Naive thymus-derived CD4-positive, alpha-beta T cell (primary cell): ENCODE measurements at regions of chr1 and their contacts with region 1.

Region 1: GRCh38 chr1:161531986-161532643 is 7.8 kb downstream of the HSPA6 start:
- DNase-seq: no peak
- ATAC-seq: no peak
- H3K4me3 ChIP-seq: no peak overlapping the region
- H3K4me3 Mint-ChIP-seq: peak overlapping the region in 9 of 10 donors; percentile 25 to 59 (median 50)
- H3K27ac ChIP-seq: no peak overlapping the region
- H3K27ac Mint-ChIP-seq: peak overlapping the region in 6 of 9 donors; percentile 10 to 80 (median 66)
- H3K4me1 ChIP-seq: peaks cover 10 to 11% of the 10 kb centered on the region in 2 donors
- H3K4me1 Mint-ChIP-seq: peaks cover 0 to 23% (median 19%) of the 10 kb centered on the region in 7 donors
- H3K27me3 ChIP-seq: no peaks in the 10 kb centered on the region
- H3K27me3 Mint-ChIP-seq: peaks cover 0 to 34% (median 0%) of the 10 kb centered on the region in 5 donors

Region 2: DNA sequence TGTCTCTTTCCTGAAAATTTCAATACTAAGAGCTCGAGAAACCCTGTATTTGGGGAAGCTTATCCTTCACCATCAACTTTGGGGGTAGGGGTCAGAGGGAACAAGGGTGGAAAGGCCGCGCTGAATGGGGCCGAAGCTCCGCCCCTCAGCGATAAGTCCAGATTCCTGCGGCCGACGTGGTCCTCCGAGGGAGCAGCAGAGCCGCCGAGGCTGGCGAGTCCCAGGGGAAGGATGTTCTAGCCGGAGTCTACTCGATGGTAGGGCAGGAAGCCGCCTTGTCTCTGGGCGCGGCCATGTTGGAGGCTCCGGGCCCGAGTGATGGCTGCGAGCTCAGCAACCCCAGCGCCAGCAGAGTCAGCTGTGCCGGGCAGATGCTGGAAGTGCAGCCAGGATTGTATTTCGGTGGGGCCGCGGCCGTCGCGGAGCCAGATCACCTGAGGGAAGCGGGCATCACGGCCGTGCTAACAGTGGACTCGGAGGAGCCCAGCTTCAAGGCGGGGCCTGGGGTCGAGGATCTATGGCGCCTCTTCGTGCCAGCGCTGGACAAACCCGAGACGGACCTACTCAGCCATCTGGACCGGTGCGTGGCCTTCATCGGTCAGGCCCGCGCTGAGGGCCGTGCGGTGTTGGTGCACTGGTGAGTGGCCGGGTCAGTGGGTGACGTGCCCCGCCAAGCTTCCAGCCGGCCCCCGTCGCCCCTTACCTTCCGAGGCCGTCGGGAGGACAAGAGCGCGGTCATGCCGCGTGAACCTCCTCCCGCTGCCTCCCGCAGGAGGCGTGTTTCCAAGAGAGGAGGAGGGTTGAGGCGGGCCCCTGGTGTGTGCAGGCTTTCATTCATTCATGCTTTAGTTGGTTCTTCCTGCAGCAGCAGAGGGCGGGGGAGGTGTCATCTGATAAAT is 217.6 kb after region 1 on chr1 and contains the start of gene DUSP12:
- CTCF ChIA-PET with region 1: no interaction called
- POLR2A ChIA-PET with region 1: interaction called, 5 read pairs
- intact Hi-C with region 1: loop called in 1 of 2 experiments (anchors 1 kb)
- DNase-seq: peak; percentile 69 to 86 (median 83)
- ATAC-seq: peak; percentile 99
- H3K4me3 ChIP-seq: peak within 1 kb of the TSS; percentile 86
- H3K4me3 Mint-ChIP-seq: peak within 1 kb of the TSS; percentile 96 to 100 (median 99)
- H3K27ac ChIP-seq: peak within 1 kb of the TSS; percentile 74
- H3K27ac Mint-ChIP-seq: peak within 1 kb of the TSS; percentile 83 to 99 (median 96)
- H3K4me1 ChIP-seq: peaks cover 10 to 12% of the 10 kb centered on the region in 2 donors
- H3K4me1 Mint-ChIP-seq: peaks cover 32 to 50% (median 43%) of the 10 kb centered on the region in 7 donors
- H3K27me3 ChIP-seq: no peaks in the 10 kb centered on the region
- H3K27me3 Mint-ChIP-seq: peaks cover 0 to 24% (median 5%) of the 10 kb centered on the region in 5 donors
- total RNA-seq, gene DUSP12: 16.1 to 31.4 (median 24.1) TPM

Region 3: DNA sequence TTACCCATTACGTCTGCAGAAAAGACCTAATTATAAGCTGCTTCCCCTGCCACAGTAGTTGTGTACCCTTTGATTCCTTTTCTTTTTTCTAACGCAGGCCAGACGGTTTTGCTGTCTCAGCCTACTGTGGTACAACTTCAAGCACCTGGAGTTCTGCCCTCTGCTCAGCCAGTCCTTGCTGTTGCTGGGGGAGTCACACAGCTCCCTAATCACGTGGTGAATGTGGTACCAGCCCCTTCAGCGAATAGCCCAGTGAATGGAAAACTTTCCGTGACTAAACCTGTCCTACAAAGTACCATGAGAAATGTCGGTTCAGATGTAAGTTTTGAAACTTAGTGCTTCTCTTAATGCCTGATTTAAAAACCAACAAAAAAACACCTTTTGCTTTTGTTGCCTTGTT is 269.8 kb after region 1 on chr1:
- CTCF ChIA-PET with region 1: no interaction called
- POLR2A ChIA-PET with region 1: no interaction called
- intact Hi-C with region 1: no loop called
- DNase-seq: no peak
- ATAC-seq: no peak
- H3K4me3 ChIP-seq: no peak overlapping the region
- H3K4me3 Mint-ChIP-seq: no peak overlapping the region
- H3K27ac ChIP-seq: no peak overlapping the region
- H3K27ac Mint-ChIP-seq: peak overlapping the region in 2 of 9 donors; percentile 9 to 24
- H3K4me1 ChIP-seq: no peaks in the 10 kb centered on the region
- H3K4me1 Mint-ChIP-seq: peaks cover 3 to 25% (median 15%) of the 10 kb centered on the region in 7 donors
- H3K27me3 ChIP-seq: no peaks in the 10 kb centered on the region
- H3K27me3 Mint-ChIP-seq: no peaks in the 10 kb centered on the region